PC-3 (cell line): ENCODE measurements at regions of chr7 and their contacts with region 1.

Region 1: DNA sequence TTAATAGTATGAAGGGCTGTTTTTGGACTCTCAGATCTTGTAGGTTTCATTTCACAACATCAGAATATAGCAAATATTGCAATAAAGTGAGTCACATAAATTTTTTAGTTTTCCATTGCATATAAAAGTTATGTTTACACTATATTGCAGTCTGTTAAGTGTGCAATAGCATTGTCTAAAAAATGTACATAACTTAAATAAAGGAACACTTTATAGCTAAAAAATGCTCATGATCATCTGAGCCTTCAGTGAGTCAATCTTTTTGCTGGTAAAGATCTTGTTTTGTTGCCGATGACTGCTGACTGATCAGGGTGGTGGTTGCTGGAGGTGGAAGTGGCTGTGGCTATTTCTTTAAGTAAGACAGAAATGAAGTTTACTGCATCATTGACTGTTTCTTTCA is 42.0 kb downstream of the ABCA13 start:
- DNase-seq: peak; percentile 82
- ATAC-seq: peak; percentile 95
- H3K4me3 ChIP-seq: no peak overlapping the region
- H3K27ac ChIP-seq: peak overlapping the region; percentile 69
- H3K4me1 ChIP-seq: peaks cover 26% of the 10 kb centered on the region
- H3K27me3 ChIP-seq: no peaks in the 10 kb centered on the region
- CTCF ChIP-seq: no peak

Region 2: DNA sequence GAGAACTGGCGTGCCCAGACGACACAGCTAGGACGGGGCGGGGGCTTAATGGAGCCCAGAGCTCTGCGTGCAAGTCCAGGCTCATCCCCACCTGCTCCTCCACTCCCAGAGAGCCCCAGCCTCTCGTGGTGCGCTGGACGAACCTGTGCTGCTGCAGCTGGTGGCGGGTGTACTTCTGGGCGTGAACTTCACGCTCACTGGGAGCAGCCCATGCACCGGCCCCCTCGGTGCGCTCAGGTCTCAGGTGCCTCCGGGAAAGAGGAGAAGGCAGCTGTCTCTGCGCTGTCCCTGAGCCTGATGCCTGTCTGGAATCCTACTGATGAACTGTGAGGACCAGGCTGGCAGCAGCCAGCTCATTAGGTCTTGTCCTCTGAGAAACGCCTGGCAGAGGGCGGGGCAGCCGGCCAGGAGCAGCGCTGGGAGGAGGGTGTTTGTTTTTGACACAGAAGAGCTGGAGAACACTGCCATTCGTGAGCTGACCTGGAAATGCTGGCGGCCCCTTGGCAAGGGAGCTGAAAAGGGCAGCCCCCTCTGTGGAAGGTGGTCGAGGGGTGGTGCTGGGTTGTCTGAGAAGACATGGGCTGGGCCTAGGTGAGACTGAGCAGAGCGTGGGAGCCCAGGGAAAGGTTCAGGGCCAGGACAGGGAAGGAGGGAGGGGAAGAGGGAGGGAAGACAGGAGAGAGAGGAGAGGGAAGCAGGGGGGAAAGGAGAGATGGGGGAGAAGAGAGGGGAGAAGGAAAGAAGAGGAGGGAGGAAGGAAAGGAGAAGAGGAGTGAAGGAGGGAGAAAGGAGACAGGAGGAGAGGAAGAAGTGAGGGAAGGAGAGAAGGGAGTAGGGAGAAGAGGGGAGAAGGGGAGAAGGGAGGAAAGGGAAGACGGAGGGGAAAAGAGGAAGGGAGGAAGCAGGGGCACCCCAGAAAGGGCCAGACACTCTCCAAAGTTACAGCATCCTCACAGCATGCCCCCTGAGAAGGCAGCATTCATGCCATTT is 577.8 kb before region 1 on chr7:
- CTCF ChIA-PET with region 1: no interaction called
- POLR2A ChIA-PET with region 1: interaction called, 13 read pairs
- intact Hi-C with region 1: no loop called
- DNase-seq: peak; percentile 67
- ATAC-seq: peak; percentile 83
- H3K4me3 ChIP-seq: peak overlapping the region; percentile 52
- H3K27ac ChIP-seq: 0 out of 2 replicates have a peak overlapping the region, but pooled peaks have one; percentile 14
- H3K4me1 ChIP-seq: peaks cover 21% of the 10 kb centered on the region
- H3K27me3 ChIP-seq: no peaks in the 10 kb centered on the region
- CTCF ChIP-seq: no peak

Region 3: DNA sequence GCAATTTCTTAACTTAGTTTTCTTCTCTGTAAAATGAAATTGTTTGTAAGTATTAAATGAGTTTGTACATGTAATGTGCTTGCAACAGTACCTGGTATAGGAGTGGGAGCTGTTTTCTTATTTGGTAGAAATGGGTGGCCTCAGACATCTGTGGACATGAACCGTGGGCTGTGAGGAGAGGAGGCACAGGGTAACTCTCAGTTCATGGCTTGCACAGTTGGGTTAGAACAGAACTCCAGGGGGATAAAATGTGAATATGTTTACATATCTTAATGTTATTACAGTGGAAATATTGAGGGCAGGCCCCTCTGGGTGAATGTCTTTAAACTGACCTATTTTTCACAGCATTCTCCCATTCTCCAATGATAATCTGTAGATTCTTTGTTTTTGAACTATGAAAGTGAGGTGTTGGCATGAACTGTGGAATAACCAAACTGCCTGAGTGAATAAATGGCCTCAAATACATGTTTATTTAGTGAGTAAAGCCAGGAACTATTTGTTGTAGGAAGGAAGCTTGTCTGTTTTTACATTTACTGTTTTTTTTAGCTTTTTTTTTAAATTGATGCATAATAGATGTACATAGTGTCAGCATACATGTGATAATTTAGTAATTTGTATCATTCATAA is 39.4 kb before region 1 on chr7:
- CTCF ChIA-PET with region 1: no interaction called
- POLR2A ChIA-PET with region 1: no interaction called
- intact Hi-C with region 1: loop called (anchors 1 kb)
- DNase-seq: peak; percentile 69
- ATAC-seq: peak; percentile 82
- H3K4me3 ChIP-seq: peak overlapping the region; percentile 11; the same call in 1 of the 2 replicates
- H3K27ac ChIP-seq: peak overlapping the region; percentile 82
- H3K4me1 ChIP-seq: peaks cover 22% of the 10 kb centered on the region
- H3K27me3 ChIP-seq: no peaks in the 10 kb centered on the region
- CTCF ChIP-seq: no peak

Region 4: GRCh38 chr7:48274662-48275061 is 61.4 kb after region 1 on chr7:
- CTCF ChIA-PET with region 1: no interaction called
- POLR2A ChIA-PET with region 1: no interaction called
- intact Hi-C with region 1: loop called (anchors 2 kb)
- DNase-seq: peak; percentile 22
- ATAC-seq: peak; percentile 63
- H3K4me3 ChIP-seq: no peak overlapping the region
- H3K27ac ChIP-seq: no peak overlapping the region
- H3K4me1 ChIP-seq: peaks cover 24% of the 10 kb centered on the region
- H3K27me3 ChIP-seq: no peaks in the 10 kb centered on the region
- CTCF ChIP-seq: no peak

Region 5: DNA sequence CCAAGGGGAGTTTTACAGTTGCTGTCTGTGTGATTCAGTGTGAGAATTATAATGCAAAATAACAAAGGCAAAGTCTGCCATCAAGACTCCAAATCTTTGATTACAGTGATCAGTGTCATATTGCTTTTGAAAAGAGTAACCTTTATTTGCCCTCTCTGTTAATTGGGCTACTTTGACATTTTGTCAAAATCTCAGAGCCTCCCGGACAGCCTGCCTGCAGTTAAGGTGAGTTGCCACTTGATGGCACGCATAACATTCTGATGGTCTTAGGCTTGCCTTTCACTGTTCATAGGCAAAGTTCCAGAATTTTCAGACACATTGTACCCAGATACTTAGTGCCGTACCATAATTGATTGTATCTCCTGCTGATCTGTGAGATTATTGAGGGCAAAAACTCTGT is 211.5 kb after region 1 on chr7:
- CTCF ChIA-PET with region 1: no interaction called
- POLR2A ChIA-PET with region 1: no interaction called
- intact Hi-C with region 1: no loop called
- DNase-seq: peak; percentile 75
- ATAC-seq: no peak
- H3K4me3 ChIP-seq: no peak overlapping the region
- H3K27ac ChIP-seq: no peak overlapping the region
- H3K4me1 ChIP-seq: peaks cover 58% of the 10 kb centered on the region
- H3K27me3 ChIP-seq: no peaks in the 10 kb centered on the region
- CTCF ChIP-seq: peak; percentile 92